ENCODE measurements at regions of chr20 and their contacts with region 1.

Region 1: GRCh38 chr20:61291166-61291829 is 39.2 kb downstream of the CDH4 start:
- DNase-seq: no peak
- H3K4me3 ChIP-seq: no peak overlapping the region
- H3K27ac ChIP-seq: no peak overlapping the region
- H3K27me3 ChIP-seq: peaks cover 0 to 2% (median 0%) of the 10 kb centered on the region in 45 donors
- CTCF ChIP-seq: no peak

Region 2: DNA sequence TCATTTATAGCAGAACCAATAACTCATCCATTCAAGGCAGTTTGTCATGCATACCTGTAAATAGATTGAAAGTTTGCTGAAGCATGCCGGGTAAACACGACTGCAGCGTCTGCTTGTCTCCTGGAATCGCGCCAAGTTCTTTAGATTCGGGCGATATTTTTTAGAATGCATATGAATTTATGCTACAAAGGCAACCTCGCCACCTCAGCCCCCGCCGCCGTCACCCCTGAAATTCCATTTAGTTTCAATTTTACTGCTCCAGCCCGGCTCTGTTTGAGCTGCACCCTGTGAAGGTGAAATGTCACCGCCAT is 56.5 kb before region 1 on chr20:
- intact Hi-C with region 1: loop called in 1 of 2 experiments (anchors 2 kb)
- DNase-seq: no peak
- H3K4me3 ChIP-seq: no peak overlapping the region
- H3K27ac ChIP-seq: no peak overlapping the region
- H3K27me3 ChIP-seq: peaks cover 0 to 21% (median 0%) of the 10 kb centered on the region in 45 donors
- CTCF ChIP-seq: no peak

Region 3: GRCh38 chr20:61516346-61517215 is 225.3 kb after region 1 on chr20:
- intact Hi-C with region 1: no loop called
- DNase-seq: peak in 1 of 10 donors; percentile 27
- H3K4me3 ChIP-seq: no peak overlapping the region
- H3K27ac ChIP-seq: no peak overlapping the region
- H3K27me3 ChIP-seq: peaks cover 0 to 4% (median 0%) of the 10 kb centered on the region in 45 donors
- CTCF ChIP-seq: no peak

Measured in dorsolateral prefrontal cortex (tissue), 120 donors.